RWPE1 (cell line): ENCODE measurements at regions of chr4 and their contacts with region 1.

Region 1: DNA sequence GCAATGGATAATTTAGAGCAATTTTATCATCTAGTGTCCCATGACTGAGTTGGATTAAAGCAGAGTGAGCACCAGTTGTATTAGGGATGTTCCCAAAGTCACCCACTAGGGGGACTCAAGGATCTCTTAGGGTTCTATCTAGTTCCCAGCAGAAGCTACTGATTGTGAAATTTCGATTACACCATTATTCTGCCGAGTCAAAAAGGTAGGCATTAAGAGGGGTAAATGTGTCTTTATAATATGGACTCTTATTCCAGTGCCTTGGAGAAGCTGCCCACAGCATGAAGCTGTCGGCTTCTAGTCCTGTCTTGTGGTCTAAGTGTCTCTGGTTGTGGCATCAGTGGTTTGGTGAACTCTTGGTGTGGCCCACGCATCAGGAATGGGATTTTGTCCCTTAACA is 53.3 kb downstream of the RGS12 start:
- DNase-seq: peak; percentile 77
- H3K27ac ChIP-seq: no peak overlapping the region
- CTCF ChIP-seq: peak; percentile 91

Region 2: GRCh38 chr4:3335385-3335784 is 10.8 kb before region 1 on chr4:
- CTCF ChIA-PET with region 1: no interaction called
- POLR2A ChIA-PET with region 1: no interaction called
- DNase-seq: no peak
- H3K27ac ChIP-seq: no peak overlapping the region
- CTCF ChIP-seq: no peak

Region 3: GRCh38 chr4:3440979-3441500 is 94.9 kb after region 1 on chr4:
- CTCF ChIA-PET with region 1: interaction called, 10 read pairs
- POLR2A ChIA-PET with region 1: no interaction called
- DNase-seq: peak; percentile 42
- H3K27ac ChIP-seq: peak overlapping the region; percentile 92
- CTCF ChIP-seq: no peak